A549 (cell line): ENCODE measurements at regions of chr11 and their contacts with region 1.

Region 1: GRCh38 chr11:33857933-33858371 is 33.9 kb downstream of the LMO2 start:
- DNase-seq: peak; percentile 45 to 71
- ATAC-seq: peak; percentile 84 to 97; a peak in 5 of 6 replicates
- H3K4me3 ChIP-seq: no peak overlapping the region
- H3K27ac ChIP-seq: no peak overlapping the region
- H3K4me1 ChIP-seq: no peaks in the 10 kb centered on the region
- CTCF ChIP-seq: peak; percentile 91
- EP300 ChIP-seq: no peak
- POLR2A ChIP-seq: no peak
- RAD21 ChIP-seq: peak; percentile 93 to 96

Region 2: DNA sequence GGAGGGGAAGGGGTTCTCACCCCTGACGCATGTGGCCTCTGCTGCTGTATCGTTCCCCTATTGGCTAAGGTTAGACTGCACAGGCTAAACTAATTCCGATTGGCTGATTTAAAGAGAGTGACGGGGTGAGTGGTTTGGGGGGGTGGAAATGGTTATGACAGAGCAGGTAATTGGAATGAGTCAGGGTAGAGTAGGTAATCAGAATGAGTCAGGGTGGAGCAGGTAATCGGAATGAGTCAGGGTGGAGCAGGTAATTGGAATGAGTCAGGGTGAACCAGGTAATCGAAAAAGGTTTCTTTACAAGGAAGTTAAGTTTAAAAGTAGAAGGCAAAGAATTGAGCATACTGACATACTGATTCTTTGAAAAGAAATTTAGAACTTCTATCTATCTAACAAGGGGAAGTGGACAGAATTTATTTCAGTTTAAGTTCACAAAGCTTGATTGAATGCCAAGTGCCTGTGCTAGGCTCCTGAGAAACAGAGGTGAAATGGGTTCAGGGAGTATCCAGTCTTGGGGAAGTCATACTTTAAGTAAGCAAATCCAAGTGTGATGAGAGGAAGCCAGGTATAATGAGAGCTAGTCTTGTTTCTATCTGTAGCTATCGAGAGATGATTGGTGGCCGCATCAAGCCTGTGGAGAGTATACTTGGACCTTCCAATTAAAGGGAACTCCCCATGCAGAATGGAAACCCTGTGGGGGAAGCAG is 215.3 kb before region 1 on chr11:
- CTCF ChIA-PET with region 1: no interaction called
- POLR2A ChIA-PET with region 1: no interaction called
- DNase-seq: peak in 1 of 2 experiments; percentile 18
- ATAC-seq: no peak
- H3K4me3 ChIP-seq: no peak overlapping the region
- H3K27ac ChIP-seq: 0 out of 6 replicates have a peak overlapping the region, but pooled peaks of 1 of the 2 experiments have one; percentile 27
- H3K4me1 ChIP-seq: peaks cover 11% of the 10 kb centered on the region
- CTCF ChIP-seq: no peak
- EP300 ChIP-seq: no peak
- POLR2A ChIP-seq: no peak
- RAD21 ChIP-seq: no peak

Region 3: GRCh38 chr11:33842236-33842915 is 15.6 kb before region 1 on chr11:
- CTCF ChIA-PET with region 1: interaction called, 16 read pairs
- POLR2A ChIA-PET with region 1: no interaction called
- DNase-seq: no peak
- ATAC-seq: no peak
- H3K4me3 ChIP-seq: no peak overlapping the region
- H3K27ac ChIP-seq: no peak overlapping the region
- H3K4me1 ChIP-seq: no peaks in the 10 kb centered on the region
- CTCF ChIP-seq: no peak
- EP300 ChIP-seq: no peak
- POLR2A ChIP-seq: no peak
- RAD21 ChIP-seq: no peak

Region 4: DNA sequence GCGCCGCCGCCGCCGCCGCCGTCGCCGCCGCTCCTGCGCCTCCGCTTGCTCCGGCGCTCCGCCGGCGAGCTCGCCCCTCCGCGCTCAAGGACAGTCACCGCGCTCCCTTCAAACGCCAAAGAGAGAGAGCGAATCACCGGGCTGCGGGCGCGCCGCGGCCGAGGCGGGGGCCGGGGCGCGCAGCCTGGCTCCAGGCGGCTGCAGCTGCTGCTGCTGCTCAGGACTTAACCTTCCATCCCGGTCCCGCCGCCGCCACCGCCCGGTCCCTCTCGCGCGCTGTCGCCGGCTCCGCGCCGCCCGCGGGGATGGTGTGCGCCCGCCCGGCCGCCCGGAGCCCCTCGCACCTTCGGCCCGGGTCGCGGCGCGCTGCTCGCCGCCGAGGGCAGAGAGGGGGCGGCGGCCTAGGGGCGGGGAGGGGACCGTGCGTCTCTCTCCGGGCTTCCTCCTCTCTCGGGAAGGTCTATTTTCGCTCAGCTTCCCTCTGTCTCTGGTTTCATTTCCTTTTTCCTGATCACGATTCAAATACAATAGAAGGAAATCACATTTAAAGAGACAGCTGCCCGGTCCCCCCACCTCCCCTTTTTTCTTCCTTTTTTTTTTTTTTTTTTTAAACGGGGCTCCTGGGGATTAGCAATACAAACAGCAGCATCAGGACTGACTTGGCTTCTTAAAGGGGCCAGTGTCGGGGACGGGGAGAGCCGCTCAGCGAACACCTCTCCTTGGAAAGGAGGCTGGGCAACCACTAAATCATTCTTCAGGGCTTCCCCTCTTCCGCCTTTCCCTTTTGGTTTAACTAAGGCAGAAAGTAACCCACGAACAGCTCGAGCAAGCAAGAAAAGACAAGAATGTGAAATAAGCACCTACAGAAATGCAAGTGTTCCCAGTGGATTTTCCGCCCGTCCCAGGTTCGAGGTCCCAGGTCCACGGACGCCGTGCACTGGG is 11.8 kb after region 1 on chr11:
- CTCF ChIA-PET with region 1: interaction called, 19 read pairs
- POLR2A ChIA-PET with region 1: no interaction called
- DNase-seq: peak in 1 of 2 experiments; percentile 14
- ATAC-seq: peak; percentile 60 to 66; a peak in 5 of 6 replicates
- H3K4me3 ChIP-seq: peak overlapping the region; percentile 76
- H3K27ac ChIP-seq: peak overlapping the region; percentile 21 to 78; a peak in 4 of 6 replicates
- H3K4me1 ChIP-seq: 0 out of 3 replicates have a peak, but pooled peaks cover 6% of the 10 kb centered on the region
- CTCF ChIP-seq: no peak
- EP300 ChIP-seq: no peak
- POLR2A ChIP-seq: no peak
- RAD21 ChIP-seq: no peak

Region 5: DNA sequence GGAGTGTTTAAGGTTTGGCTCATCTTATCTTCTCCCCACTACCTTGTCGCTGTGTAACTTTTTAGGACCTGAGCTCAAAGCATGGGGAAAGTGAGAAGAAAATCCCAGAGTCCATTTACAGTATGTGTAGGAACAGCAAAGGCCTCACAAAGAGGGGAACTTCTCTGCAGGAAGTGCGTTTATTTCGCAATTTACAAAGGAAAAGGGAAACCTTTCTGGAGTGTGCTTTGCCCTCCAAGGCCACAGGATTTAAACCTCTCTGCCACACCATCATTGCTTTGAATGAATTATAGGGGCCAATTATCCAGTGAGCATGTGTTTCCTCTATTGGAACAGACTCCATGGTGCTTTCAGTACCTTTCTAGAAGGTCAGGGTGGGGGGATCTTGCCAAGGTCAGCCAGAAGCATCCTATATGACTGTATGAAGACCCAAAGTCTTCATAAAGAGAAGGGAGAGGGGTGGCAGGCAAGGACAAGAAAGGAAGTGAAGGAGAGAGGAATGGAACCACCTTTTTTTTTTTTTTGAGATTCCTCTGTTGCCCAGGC is 102.0 kb after region 1 on chr11:
- CTCF ChIA-PET with region 1: interaction called, 17 read pairs
- POLR2A ChIA-PET with region 1: no interaction called
- DNase-seq: no peak
- ATAC-seq: no peak
- H3K4me3 ChIP-seq: no peak overlapping the region
- H3K27ac ChIP-seq: no peak overlapping the region
- H3K4me1 ChIP-seq: no peaks in the 10 kb centered on the region
- CTCF ChIP-seq: no peak
- EP300 ChIP-seq: no peak
- POLR2A ChIP-seq: no peak
- RAD21 ChIP-seq: no peak

Region 6: DNA sequence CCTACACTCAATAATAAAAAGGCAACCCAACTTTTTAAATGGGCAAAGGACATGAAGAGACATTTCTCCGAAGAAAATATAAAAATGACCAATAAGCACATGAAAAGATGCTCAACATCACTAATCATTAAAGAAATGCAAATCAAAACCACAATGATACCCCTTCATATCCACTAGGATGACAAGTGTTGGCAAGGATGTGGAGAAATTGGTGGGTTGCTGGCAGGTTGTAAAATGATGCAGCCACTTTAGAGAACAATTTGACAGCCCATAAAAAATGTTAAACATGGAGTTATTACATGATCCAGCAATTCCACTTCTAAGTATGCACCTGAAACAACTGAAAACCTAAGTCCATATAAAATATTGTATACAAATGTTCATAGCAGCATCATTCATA is 107.1 kb after region 1 on chr11:
- CTCF ChIA-PET with region 1: interaction called, 245 read pairs
- POLR2A ChIA-PET with region 1: no interaction called
- DNase-seq: no peak
- ATAC-seq: no peak
- H3K4me3 ChIP-seq: no peak overlapping the region
- H3K27ac ChIP-seq: no peak overlapping the region
- H3K4me1 ChIP-seq: no peaks in the 10 kb centered on the region
- CTCF ChIP-seq: no peak
- EP300 ChIP-seq: no peak
- POLR2A ChIP-seq: no peak
- RAD21 ChIP-seq: no peak

Region 7: GRCh38 chr11:33987975-33988580 is 130.1 kb after region 1 on chr11:
- CTCF ChIA-PET with region 1: interaction called, 245 read pairs
- POLR2A ChIA-PET with region 1: no interaction called
- DNase-seq: peak; percentile 41 to 88
- ATAC-seq: peak; percentile 90 to 99
- H3K4me3 ChIP-seq: no peak overlapping the region
- H3K27ac ChIP-seq: no peak overlapping the region
- H3K4me1 ChIP-seq: no peaks in the 10 kb centered on the region
- CTCF ChIP-seq: peak; percentile 67
- EP300 ChIP-seq: no peak
- POLR2A ChIP-seq: no peak
- RAD21 ChIP-seq: peak; percentile 59 to 78